ENCODE measurements at regions of chr3 and their contacts with region 1.

Region 1: DNA sequence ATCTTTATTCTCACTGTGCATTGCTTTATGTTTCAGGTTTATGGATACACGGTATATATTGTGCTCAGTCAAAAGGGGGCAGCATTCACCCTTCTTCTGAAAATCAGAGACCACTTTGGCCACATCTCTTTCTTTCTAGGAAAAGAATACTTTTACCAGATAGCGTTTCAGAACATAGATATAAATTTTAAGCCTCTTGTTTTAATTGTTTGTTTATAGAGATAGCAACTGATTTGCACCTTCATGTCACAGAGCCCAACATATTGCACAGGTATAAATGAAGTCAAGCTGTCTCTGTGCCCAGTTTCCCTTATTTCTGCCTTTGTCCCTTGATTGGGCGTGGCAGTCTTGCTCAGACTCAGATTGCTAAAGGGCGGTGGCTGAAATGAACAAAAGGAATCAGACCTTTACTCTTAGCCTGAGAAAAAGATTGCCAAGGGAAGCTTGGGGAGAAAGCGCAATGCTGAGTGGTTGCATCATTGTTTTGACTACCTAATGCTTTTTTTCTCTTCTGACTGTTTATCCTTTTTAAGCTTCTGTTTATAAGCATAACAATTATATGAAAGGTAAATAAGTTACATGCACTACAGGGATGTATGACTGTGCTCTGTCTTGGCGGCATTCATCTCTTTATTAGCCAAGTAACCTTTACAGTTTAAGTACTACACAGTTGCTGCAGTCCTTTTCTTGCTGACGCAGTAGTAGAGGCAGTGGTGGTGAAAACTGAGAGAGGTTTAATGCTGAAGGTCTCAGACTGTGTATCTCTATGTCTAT is 70.8 kb upstream of the ZBTB20 start:
- DNase-seq: no peak
- H3K4me3 ChIP-seq: no peak overlapping the region
- CTCF ChIP-seq: peak; percentile 58

Region 2: DNA sequence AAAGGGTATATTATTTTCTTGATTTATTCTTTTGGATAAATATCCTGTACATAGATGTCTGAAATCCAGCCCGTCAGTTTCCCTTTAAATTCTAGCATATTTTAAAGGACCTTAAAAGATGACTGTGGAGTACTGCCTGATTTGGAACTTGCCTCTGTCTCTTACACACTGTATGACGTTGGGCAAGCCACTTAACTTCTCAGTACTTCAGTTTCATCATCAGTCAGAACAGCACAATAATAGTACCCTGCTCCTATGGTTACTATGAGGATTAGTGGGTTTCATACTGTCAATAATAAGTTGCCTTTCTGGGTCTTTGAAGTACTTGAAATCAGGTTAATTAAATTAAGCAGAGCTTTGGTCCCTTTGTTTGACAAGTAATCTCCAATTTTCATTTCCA is 549.8 kb before region 1 on chr3:
- CTCF ChIA-PET with region 1: no interaction called
- POLR2A ChIA-PET with region 1: no interaction called
- DNase-seq: no peak
- H3K4me3 ChIP-seq: no peak overlapping the region
- CTCF ChIP-seq: no peak

Region 3: GRCh38 chr3:115236496-115236895 is 18.6 kb after region 1 on chr3:
- CTCF ChIA-PET with region 1: interaction called, 11 read pairs
- POLR2A ChIA-PET with region 1: no interaction called
- DNase-seq: no peak
- H3K4me3 ChIP-seq: no peak overlapping the region
- CTCF ChIP-seq: no peak

Region 4: DNA sequence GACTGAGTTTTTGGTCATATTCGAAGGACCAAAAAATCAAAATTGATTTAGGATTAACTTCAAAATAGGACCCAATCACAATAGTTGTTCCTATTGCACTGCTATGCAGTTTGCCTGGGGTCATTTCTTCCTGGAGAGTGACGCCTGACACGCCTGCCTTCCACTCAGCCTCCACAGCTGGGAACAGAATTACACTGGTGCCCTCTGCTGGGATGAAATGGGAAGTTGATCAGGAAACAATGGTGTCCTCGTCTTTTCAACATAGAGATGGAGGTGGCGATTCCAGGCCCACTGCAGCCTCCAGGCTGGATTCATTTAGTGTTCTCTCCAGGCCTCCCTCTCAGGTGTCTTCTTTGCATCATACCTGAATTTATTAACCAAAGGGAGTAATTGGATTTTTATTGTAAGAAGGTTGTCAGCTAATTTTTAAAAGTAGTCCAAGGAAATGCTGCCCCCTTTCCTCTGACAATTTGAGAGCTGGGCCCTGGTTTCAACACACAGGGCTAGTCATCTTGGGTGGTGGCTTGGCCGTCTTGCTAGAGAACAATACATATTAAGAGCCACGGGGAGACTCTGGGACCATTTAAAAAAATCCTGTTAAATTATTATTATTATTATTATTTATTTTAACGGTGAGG is 475.1 kb after region 1 on chr3:
- CTCF ChIA-PET with region 1: interaction called, 56 read pairs
- POLR2A ChIA-PET with region 1: no interaction called
- DNase-seq: no peak
- H3K4me3 ChIP-seq: no peak overlapping the region
- CTCF ChIP-seq: peak; percentile 80

Region 5: GRCh38 chr3:115790759-115791158 is 572.9 kb after region 1 on chr3:
- CTCF ChIA-PET with region 1: interaction called, 42 read pairs
- POLR2A ChIA-PET with region 1: no interaction called
- DNase-seq: peak; percentile 90
- H3K4me3 ChIP-seq: no peak overlapping the region
- CTCF ChIP-seq: no peak

Region 6: GRCh38 chr3:115819785-115820384 is 602.0 kb after region 1 on chr3:
- CTCF ChIA-PET with region 1: interaction called, 43 read pairs
- POLR2A ChIA-PET with region 1: no interaction called
- DNase-seq: no peak
- H3K4me3 ChIP-seq: no peak overlapping the region
- CTCF ChIP-seq: peak; percentile 87